Activated CD4-positive, alpha-beta memory T cell treated with anti-CD3 and anti-CD28 coated beads for 36 hours (primary cell): ENCODE measurements at regions of chrX and their contacts with region 1.

Region 1: DNA sequence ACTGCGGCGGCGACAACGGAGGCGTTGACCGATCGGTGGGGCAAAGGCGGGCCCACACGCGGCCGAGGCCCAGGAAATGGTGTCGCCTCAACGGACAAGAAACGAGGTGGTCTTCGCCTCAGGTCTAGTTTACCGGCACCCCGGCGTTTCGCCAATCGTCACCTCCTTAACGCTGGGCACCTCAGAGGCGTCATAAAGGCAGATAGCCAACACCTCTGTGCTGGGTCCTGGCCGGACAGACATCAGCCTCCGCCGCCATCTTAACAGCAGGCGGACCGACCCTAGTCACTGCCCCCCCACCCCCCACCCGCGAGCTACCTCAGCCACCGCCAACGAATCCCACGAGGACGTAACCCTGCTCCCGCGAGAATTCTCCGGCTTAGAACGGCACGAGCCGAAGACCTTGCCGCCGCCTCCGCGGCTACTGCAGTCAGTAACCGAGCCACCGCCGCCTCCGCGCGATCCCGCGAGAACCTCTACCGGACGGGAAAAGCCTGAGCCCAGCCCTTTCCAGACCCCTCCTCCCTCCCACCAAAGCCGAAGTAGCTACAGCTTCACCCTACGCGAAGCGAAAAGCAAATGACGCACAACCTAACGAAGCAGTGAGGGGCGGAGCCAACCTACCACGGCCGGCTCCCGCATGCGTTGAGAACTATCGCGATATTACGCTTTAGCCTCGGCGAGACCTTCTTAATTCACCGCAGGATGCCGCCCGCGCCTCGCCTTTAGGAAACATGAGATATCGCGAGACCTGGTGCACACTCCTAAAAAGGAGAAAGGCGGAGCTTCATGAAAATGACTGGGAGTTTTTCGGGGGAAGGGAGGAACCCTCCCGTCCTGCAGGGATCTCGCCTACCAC is 2.7 kb downstream of the HUWE1 start:
- DNase-seq: peak; percentile 95
- H3K4me3 Mint-ChIP-seq: peak overlapping the region; percentile 92
- H3K27ac Mint-ChIP-seq: peak overlapping the region; percentile 96
- H3K4me1 Mint-ChIP-seq: peaks cover 27% of the 10 kb centered on the region
- H3K27me3 Mint-ChIP-seq: no peaks in the 10 kb centered on the region

Region 2: GRCh38 chrX:53654376-53654775 is 29.4 kb before region 1 on chrX:
- CTCF ChIA-PET with region 1: no interaction called
- POLR2A ChIA-PET with region 1: no interaction called
- intact Hi-C with region 1: no loop called
- DNase-seq: no peak
- H3K4me3 Mint-ChIP-seq: no peak overlapping the region
- H3K27ac Mint-ChIP-seq: peak overlapping the region; percentile 23
- H3K4me1 Mint-ChIP-seq: peaks cover 46% of the 10 kb centered on the region
- H3K27me3 Mint-ChIP-seq: no peaks in the 10 kb centered on the region

Region 3: DNA sequence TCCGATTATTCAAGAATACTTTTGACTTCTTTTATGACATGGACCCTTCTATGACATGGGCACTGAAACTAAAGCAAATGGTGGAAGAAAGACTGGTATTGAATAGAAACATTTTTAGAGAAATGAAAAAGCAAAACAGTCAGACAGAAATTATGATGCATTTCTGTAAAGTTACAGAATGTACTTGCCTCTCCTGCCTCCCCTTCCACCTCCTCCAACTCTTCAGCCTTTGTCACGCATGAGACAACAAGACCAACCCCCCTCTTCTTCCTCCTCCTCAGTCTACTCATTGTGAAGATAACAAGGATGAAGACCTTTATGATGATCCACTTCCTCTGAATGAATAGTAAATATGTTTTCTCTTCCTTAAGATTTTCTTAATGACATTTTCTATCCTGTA is 49.0 kb after region 1 on chrX:
- CTCF ChIA-PET with region 1: no interaction called
- POLR2A ChIA-PET with region 1: interaction called, 7 read pairs
- intact Hi-C with region 1: loop called (anchors 1 kb)
- DNase-seq: peak; percentile 56
- H3K4me3 Mint-ChIP-seq: peak overlapping the region; percentile 60
- H3K27ac Mint-ChIP-seq: peak overlapping the region; percentile 100
- H3K4me1 Mint-ChIP-seq: peaks cover 67% of the 10 kb centered on the region
- H3K27me3 Mint-ChIP-seq: no peaks in the 10 kb centered on the region

Region 4: DNA sequence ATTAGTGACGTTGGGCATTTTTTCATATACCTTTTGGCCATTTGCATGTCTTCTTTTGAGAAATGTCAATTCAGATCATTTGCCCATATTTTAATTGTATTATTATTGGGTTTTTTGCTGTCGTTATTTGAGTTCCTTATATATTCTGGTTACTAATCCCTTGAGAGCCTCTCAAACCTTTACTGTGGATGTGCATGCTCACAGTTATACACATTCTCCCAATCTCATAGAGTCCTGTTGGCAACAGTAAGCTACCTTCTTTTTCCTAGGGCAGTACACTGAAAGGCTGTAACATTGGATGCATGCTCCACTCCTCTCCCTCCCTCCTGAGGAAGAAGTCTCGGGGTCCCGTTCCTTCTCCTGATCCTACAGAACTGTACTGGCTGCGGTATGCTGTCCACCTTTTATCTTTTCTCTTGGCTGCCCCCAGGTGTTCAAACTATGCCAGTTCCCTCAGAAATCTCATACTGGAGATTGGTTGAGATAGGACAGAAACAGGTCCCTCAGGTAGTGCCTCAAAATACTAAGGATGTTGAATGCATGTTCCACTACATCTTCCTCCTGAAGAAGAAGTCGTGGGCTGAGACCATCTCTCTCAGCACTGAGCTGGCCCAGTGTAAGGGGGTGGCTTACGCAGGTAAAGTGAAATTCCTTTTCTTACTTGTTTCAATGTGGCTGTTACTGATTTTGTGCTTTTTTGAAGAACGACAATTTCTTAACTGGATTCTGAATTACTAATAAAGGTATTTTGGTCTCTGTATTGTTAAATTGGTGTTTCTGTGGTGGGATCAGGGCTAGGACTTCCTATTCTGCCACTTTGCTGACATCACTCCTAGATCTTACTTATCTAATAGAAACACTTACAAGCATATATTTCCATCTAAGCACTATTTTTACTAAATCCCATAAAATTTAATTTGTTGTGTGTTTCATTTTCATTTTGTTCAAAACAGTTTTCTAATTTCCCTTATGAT is 148.2 kb after region 1 on chrX:
- CTCF ChIA-PET with region 1: interaction called, 4 read pairs
- POLR2A ChIA-PET with region 1: interaction called, 3 read pairs
- intact Hi-C with region 1: loop called (anchors 2 kb)
- DNase-seq: peak; percentile 58
- H3K4me3 Mint-ChIP-seq: peak overlapping the region; percentile 61
- H3K27ac Mint-ChIP-seq: peak overlapping the region; percentile 81
- H3K4me1 Mint-ChIP-seq: peaks cover 34% of the 10 kb centered on the region
- H3K27me3 Mint-ChIP-seq: no peaks in the 10 kb centered on the region